T-cell (primary cell): ENCODE measurements at regions of chr17 and their contacts with region 1.

Region 1: DNA sequence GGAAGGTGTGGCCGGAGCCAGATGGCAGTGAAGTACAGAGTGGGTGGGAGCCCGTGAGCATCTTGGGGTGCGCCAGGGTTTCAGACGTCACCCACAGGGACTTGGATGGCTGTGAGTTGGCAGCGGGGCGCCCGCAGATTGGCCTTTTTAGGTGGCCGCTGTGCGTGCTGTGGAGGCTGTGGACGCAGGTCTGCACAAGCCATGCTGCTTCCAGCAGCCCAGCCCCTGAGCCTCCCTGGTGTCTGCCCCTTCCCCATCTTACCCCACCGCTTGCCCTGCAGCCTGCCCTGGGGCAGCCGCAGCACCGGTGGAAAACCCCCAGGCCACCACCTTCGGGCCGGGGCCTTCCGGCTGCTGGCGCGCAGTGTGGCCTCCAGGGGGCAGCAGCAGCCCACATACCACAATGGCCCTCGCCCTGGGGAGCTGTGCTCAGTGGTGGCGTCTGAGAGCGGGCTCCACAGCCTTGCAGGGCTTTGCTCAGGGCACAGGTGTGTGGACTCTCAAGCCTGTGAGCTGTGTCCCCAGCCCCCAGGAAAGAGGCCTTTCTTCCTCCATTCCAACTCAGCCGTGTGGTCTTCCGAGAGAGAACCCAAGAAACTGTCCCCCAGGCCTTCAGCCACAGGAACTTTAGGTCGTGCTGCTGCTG is 11.8 kb downstream of the ENDOV start:
- DNase-seq: peak; percentile 70 to 93 (median 84)
- ATAC-seq: peak; percentile 91 to 98 (median 96)
- H3K4me3 ChIP-seq: no peak overlapping the region
- H3K4me3 Mint-ChIP-seq: no peak overlapping the region
- H3K27ac ChIP-seq: no peak overlapping the region
- H3K27ac Mint-ChIP-seq: no peak overlapping the region
- H3K4me1 ChIP-seq: peaks cover 0 to 25% of the 10 kb centered on the region in 2 experiments
- H3K4me1 Mint-ChIP-seq: peaks cover 4 to 18% (median 8%) of the 10 kb centered on the region in 3 donors
- H3K27me3 ChIP-seq: peaks cover 0 to 34% of the 10 kb centered on the region in 2 experiments
- H3K27me3 Mint-ChIP-seq: peaks cover 0 to 1% of the 10 kb centered on the region in 2 donors

Region 2: GRCh38 chr17:80899402-80900268 is 472.8 kb after region 1 on chr17:
- CTCF ChIA-PET with region 1: interaction called, 3 to 11 read pairs
- POLR2A ChIA-PET with region 1: no interaction called
- DNase-seq: peak; percentile 49 to 86 (median 72)
- ATAC-seq: peak; percentile 84 to 92 (median 87)
- H3K4me3 ChIP-seq: no peak overlapping the region
- H3K4me3 Mint-ChIP-seq: no peak overlapping the region
- H3K27ac ChIP-seq: no peak overlapping the region
- H3K27ac Mint-ChIP-seq: peak overlapping the region in 1 of 2 donors; percentile 60
- H3K4me1 ChIP-seq: peaks cover 3 to 46% of the 10 kb centered on the region in 2 experiments
- H3K4me1 Mint-ChIP-seq: peaks cover 11 to 46% (median 13%) of the 10 kb centered on the region in 3 donors
- H3K27me3 ChIP-seq: no peaks in the 10 kb centered on the region
- H3K27me3 Mint-ChIP-seq: no peaks in the 10 kb centered on the region